ENCODE measurements at regions of chr3 and their contacts with region 1.

Region 1: DNA sequence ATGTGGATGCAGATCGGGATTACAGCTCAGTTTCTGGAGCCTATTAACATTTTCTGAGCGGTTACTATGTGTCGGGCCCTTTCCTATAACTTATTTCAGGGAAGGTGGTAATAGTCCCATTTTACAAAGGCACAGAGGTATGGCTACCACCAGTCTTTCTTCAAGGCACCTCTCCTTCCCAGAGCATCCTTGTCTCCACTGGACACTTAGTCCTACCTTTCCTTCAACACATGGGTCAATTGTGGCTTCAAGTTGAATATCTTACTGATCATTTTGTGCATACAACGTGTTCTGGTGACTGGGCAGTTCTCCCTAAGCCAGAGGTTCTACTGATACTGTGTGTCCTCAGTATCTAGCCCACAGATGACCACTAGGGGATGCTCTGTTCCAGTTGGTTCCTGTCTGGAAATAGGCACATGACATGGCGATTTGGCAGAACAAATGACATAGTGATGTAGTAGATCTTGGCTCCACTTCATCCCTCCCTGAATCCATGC is 60.7 kb upstream of the CMTM8 start:
- DNase-seq: no peak
- H3K4me3 ChIP-seq: no peak overlapping the region
- H3K27ac ChIP-seq: no peak overlapping the region
- H3K4me1 ChIP-seq: peaks cover 0 to 13% (median 3%) of the 10 kb centered on the region in 4 donors
- H3K27me3 ChIP-seq: no peaks in the 10 kb centered on the region
- CTCF ChIP-seq: peak; percentile 33 to 58 (median 46)
- EP300 ChIP-seq: no peak
- POLR2A ChIP-seq: no peak

Region 2: GRCh38 chr3:32238453-32239306 is 60.9 kb after region 1 on chr3 and contains the start of gene CMTM8:
- intact Hi-C with region 1: no loop called
- DNase-seq: peak; percentile 86
- H3K4me3 ChIP-seq: peak within 1 kb of the TSS; percentile 63 to 78 (median 66)
- H3K27ac ChIP-seq: peak within 1 kb of the TSS; percentile 47 to 68 (median 56)
- H3K4me1 ChIP-seq: peaks cover 11 to 22% (median 20%) of the 10 kb centered on the region in 4 donors
- H3K27me3 ChIP-seq: peaks cover 0 to 31% (median 5%) of the 10 kb centered on the region in 4 donors
- CTCF ChIP-seq: no peak
- EP300 ChIP-seq: no peak
- POLR2A ChIP-seq: no peak
- total RNA-seq, gene CMTM8: 1.7 to 4.2 (median 3.8) TPM

Region 3: DNA sequence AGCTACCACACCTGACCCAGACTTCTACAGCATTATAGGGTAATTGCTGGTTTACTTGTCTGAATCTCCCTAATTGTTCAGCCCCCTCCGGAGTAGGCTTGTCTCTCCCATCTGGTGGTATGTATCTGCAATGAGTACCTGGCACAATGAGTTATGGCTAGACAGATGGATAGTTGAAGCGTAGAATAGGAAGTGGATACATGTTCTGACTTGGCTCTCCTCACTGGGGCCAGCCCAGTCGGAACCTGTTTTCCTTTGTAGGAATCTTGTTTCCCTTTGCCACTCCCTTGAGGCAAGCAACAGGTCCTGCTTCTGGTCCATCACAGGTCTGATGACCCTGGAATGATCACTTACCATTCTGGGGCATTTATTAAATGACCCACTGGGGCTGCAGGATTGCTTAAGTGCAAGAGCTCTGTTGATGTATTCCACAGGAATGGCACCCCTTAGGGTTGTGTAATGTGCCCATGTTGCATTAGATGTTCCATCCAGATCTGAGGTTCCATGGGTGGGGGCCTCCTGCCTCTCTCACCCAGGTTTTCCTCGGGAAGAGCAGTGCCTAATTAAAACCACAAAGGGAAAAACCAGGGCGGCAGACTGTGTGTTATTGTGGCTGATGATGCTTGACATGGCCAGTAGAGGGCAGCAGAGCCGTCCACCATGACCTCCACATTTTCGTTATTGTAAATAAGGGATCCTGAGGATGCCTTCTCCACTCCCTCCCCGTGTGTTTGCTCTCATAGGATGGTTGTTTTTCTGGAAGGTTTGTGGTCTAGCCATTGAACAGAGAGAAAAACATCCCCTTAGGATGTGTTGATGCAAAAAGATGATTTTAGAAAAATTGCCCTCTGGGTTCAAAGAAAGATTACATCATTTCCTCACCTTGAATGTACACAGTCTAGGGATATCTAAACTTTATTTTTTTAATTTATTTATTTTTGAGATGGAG is 118.8 kb after region 1 on chr3:
- intact Hi-C with region 1: loop called (anchors 10 kb)
- DNase-seq: no peak
- H3K4me3 ChIP-seq: no peak overlapping the region
- H3K27ac ChIP-seq: no peak overlapping the region
- H3K4me1 ChIP-seq: no peaks in the 10 kb centered on the region
- H3K27me3 ChIP-seq: no peaks in the 10 kb centered on the region
- CTCF ChIP-seq: peak; percentile 80 to 91 (median 89)
- EP300 ChIP-seq: no peak
- POLR2A ChIP-seq: no peak